SK-N-SH (cell line): ENCODE measurements at regions of chr19 and their contacts with region 1.

Region 1: DNA sequence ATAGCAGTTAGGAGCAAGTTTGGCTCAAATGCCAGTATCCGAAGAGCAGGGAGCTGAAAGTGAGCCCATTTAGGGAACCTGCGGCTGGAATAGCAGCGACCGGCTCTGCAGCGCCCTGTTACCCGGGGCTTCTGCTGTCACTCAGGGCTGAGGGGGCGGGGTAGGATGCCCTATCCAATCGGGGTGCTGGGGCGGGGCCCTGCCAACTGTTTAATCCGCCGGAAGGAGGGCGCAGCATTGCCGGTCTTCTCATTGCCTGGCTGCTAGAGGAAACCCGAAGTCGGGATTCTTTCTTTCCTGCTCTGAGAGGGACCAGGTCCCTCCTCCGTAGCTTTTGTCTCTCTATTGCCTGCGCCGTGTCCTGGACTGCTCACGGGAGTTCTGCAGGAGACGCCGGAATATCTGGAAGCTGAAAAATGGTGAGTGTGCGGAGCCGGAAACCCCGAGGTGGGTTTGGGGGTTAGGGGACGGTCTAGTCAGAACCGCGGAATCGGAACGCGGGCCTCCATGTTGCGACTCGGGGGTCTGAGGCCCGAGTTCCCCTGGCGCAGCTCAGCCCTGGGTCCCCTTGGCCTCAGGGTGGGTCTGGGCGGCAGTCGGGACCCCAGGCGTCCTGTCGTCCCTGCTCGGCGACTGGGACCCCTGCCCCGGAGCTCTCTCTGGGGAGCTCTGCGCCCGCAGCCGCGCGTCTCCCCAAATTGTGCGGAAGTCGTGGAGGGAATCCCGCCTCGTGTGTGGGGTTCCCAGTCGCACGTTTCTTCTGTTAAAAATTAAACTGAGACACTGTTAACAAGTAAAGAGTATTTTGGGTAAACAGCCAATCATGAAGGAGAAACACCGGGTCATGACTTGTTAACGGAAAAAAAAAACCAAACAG is 22.8 kb downstream of the ZNF763 start:
- DNase-seq: peak; percentile 94
- H3K4me3 ChIP-seq: peak overlapping the region; percentile 88 to 93
- H3K27ac ChIP-seq: peak overlapping the region; percentile 67 to 86
- H3K4me1 ChIP-seq: no peaks in the 10 kb centered on the region; a peak in 1 of 4 replicates
- H3K27me3 ChIP-seq: no peaks in the 10 kb centered on the region
- CTCF ChIP-seq: no peak
- EP300 ChIP-seq: no peak
- RAD21 ChIP-seq: no peak

Region 2: DNA sequence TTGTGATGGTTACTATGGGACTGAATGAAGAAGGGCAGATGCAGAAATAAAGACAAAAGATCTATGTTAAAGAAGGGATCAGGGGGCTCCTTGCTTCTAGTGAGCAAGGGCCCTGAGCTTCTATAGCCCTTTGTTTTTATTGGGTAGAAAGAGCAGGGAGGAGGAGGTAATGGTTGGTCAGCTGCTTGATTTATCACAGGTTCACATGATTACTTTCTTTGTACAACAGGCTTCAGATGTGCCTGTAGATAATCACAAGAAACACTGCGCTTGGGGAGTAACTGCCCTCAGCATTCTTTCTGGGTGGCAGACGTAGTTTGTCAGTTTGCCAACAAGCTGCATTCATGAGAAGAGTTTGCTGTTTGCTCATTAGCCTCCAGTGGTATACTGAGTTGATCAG is 143.9 kb before region 1 on chr19:
- CTCF ChIA-PET with region 1: no interaction called
- POLR2A ChIA-PET with region 1: no interaction called
- DNase-seq: no peak
- H3K4me3 ChIP-seq: no peak overlapping the region
- H3K27ac ChIP-seq: no peak overlapping the region
- H3K4me1 ChIP-seq: peaks cover 0 to 5% of the 10 kb centered on the region in 2 experiments; a peak in 1 of 4 replicates
- H3K27me3 ChIP-seq: no peaks in the 10 kb centered on the region
- CTCF ChIP-seq: no peak
- EP300 ChIP-seq: no peak
- RAD21 ChIP-seq: no peak

Region 3: DNA sequence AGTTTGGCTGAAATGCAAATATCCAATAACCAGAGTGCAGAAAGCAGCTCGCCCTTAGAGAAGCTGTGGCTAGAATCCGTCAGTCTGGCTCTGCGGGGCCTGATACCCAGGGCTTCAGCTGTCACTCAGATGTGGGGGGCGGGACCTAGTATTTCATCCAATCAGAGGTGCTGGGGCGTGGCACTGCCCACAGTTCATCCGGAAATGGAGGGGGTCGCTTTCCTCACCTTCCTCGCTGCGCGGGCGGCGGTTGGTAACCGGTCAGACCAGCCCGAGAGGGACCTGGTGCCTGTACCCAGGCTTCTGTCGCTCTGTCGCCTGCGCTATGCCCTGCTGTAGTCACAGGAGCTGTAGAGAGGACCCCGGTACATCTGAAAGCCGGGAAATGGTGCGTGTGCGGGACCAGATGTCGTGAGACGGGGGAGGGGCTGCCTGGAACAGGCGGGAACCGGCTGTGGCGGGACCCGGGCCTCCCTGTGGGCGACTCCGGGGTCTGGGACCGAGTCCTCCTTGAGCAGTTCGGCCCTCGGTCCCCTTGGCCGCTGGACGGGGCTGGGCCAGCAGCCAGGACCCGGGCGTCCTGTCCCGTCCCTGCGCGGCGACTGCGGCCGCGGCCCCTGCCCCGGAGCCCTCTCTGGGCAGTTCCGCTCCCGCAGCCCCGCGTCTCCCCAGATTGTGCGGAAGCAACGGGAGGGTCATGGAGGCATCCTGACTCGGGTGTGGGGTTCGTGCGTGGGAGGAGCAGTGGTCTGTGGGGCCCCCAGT is 62.6 kb before region 1 on chr19 and contains the start of gene ZNF700:
- CTCF ChIA-PET with region 1: interaction called, 84 read pairs
- POLR2A ChIA-PET with region 1: interaction called, 3 read pairs
- DNase-seq: peak; percentile 94
- H3K4me3 ChIP-seq: peak within 1 kb of the TSS; percentile 72 to 95
- H3K27ac ChIP-seq: peak within 1 kb of the TSS; percentile 47 to 85; a peak in 3 of 4 replicates
- H3K4me1 ChIP-seq: peaks cover 0 to 2% of the 10 kb centered on the region in 2 experiments; a peak in 1 of 4 replicates
- H3K27me3 ChIP-seq: no peaks in the 10 kb centered on the region
- CTCF ChIP-seq: no peak
- EP300 ChIP-seq: no peak
- RAD21 ChIP-seq: no peak
- polyA plus RNA-seq, gene ZNF700: 3.5 and 4.4 TPM in 2 replicates

Region 4: DNA sequence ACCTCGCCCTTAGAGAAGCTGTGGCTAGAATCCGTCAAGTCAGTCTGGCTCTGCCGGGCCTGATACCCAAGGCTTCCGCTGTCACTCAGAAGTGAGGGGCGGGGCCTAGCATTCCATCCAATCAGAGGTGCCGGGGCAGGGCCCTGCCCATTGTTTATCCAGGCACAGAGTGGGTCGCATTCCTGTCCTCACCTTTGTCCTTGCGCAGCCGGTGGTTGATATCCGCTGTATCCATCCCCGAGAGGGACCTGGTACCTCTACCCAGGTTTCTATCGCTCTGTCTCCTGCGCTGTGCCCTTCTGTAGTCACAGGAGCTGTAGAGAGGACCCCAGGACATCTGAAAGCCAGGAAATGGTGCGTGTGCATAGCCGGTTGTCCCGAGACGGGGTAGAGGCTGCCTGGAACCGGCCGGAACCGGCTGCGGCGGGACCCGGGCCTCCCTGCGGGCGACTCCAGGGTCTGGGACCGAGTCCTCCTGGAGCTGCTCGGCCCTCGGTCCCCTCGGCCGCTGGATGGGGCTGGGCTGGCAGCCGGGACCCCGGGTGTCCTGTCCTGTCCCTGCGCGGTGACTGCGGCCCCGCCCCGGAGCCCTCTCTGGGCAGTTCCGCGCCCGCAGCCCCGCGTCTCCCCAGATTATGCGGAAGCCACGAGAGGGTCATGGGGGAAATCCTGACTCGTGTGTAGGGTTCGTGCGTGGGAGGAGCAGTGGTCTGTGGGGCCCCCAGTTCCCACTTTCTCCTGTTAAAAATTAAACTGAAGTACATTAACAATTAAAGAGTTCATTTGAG is 22.6 kb before region 1 on chr19 and contains the start of gene ZNF763:
- CTCF ChIA-PET with region 1: interaction called, 123 read pairs
- POLR2A ChIA-PET with region 1: interaction called, 12 read pairs
- DNase-seq: peak; percentile 92
- H3K4me3 ChIP-seq: peak within 1 kb of the TSS; percentile 65
- H3K27ac ChIP-seq: peak within 1 kb of the TSS; percentile 30 to 72
- H3K4me1 ChIP-seq: peaks cover 0 to 7% of the 10 kb centered on the region in 2 experiments; a peak in 1 of 4 replicates
- H3K27me3 ChIP-seq: no peaks in the 10 kb centered on the region
- CTCF ChIP-seq: no peak
- EP300 ChIP-seq: no peak
- RAD21 ChIP-seq: no peak
- polyA plus RNA-seq, gene ZNF763: 0.55 and 0.72 TPM in 2 replicates

Region 5: GRCh38 chr19:11970174-11970573 is 17.5 kb before region 1 on chr19:
- CTCF ChIA-PET with region 1: interaction called, 123 read pairs
- POLR2A ChIA-PET with region 1: interaction called, 12 read pairs
- DNase-seq: no peak
- H3K4me3 ChIP-seq: no peak overlapping the region
- H3K27ac ChIP-seq: no peak overlapping the region
- H3K4me1 ChIP-seq: no peaks in the 10 kb centered on the region
- H3K27me3 ChIP-seq: no peaks in the 10 kb centered on the region
- CTCF ChIP-seq: no peak
- EP300 ChIP-seq: no peak
- RAD21 ChIP-seq: no peak

Region 6: DNA sequence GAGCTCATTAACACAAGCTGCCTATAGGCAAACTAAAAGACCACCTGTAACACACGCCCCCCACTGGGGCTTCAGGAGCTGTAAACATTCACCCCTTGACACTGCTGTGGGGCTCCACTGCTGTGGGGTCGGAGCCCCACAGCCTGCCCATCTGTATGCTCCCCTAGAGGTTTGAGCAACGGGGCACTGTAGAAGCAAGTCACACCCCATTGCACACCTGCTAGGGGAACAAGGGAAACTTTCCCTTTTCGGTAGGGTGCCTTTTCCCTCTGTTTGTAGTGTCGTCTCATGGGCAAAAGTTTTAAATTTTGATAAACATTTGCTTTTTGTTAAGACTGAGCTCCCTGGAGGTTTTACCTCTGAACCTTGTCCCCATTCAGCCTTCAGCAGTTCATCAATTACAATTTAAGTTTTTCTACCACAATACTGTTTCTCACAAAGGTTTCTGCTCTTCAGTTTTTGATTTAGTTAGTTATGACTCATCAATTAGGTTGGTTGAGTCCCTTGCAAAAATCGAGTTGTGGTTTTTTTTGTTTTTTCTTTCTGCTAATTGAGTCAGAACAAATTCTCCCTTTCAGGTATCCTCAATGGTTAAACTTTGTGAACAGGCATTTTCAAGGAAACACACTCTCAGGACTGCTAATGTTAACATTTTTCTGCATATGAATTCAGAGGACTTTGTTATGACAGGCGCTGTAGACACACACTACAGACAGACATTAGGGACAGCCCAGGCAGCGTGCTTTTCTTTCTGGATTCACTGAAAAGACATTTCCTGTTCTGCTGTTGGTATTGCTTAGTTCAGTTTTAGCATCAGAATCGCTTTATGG is 12.7 kb after region 1 on chr19:
- CTCF ChIA-PET with region 1: interaction called, 11 read pairs
- POLR2A ChIA-PET with region 1: no interaction called
- DNase-seq: no peak
- H3K4me3 ChIP-seq: no peak overlapping the region
- H3K27ac ChIP-seq: peak overlapping the region in 1 of 2 experiments; percentile 19; a peak in 1 of 4 replicates
- H3K4me1 ChIP-seq: no peaks in the 10 kb centered on the region
- H3K27me3 ChIP-seq: no peaks in the 10 kb centered on the region
- CTCF ChIP-seq: no peak
- EP300 ChIP-seq: no peak
- RAD21 ChIP-seq: no peak

Region 7: GRCh38 chr19:12064590-12065538 is 77.2 kb after region 1 on chr19 and contains the start of gene ZNF844:
- CTCF ChIA-PET with region 1: interaction called, 10 read pairs
- POLR2A ChIA-PET with region 1: no interaction called
- DNase-seq: peak; percentile 97
- H3K4me3 ChIP-seq: peak within 1 kb of the TSS; percentile 55 to 69
- H3K27ac ChIP-seq: peak within 1 kb of the TSS in 1 of 2 experiments; percentile 67; a peak in 1 of 4 replicates
- H3K4me1 ChIP-seq: no peaks in the 10 kb centered on the region; a peak in 1 of 4 replicates
- H3K27me3 ChIP-seq: no peaks in the 10 kb centered on the region
- CTCF ChIP-seq: no peak
- EP300 ChIP-seq: no peak
- RAD21 ChIP-seq: no peak
- polyA plus RNA-seq, gene ZNF844: 0.28 and 0.31 TPM in 2 replicates